ENCODE measurements at regions of chr9 and their contacts with region 1.

Region 1: GRCh38 chr9:38068866-38069629 is at the start of gene SHB:
- DNase-seq: no peak
- ATAC-seq: peak; percentile 70
- H3K4me3 ChIP-seq: peak within 1 kb of the TSS; percentile 82 to 93
- H3K27ac ChIP-seq: peak within 1 kb of the TSS; percentile 76
- H3K4me1 ChIP-seq: peaks cover 5% of the 10 kb centered on the region
- H3K27me3 ChIP-seq: no peaks in the 10 kb centered on the region
- CTCF ChIP-seq: peak; percentile 36; the same call in 1 of the 2 replicates
- total RNA-seq, gene SHB: 59.9 TPM

Region 2: GRCh38 chr9:37840560-37841194 is 228.4 kb before region 1 on chr9:
- CTCF ChIA-PET with region 1: no interaction called
- POLR2A ChIA-PET with region 1: no interaction called
- in situ Hi-C with region 1: no loop called
- intact Hi-C with region 1: no loop called
- DNase-seq: peak; percentile 33
- ATAC-seq: peak; percentile 87
- H3K4me3 ChIP-seq: no peak overlapping the region
- H3K27ac ChIP-seq: no peak overlapping the region
- H3K4me1 ChIP-seq: no peaks in the 10 kb centered on the region
- H3K27me3 ChIP-seq: no peaks in the 10 kb centered on the region
- CTCF ChIP-seq: no peak

Region 3: DNA sequence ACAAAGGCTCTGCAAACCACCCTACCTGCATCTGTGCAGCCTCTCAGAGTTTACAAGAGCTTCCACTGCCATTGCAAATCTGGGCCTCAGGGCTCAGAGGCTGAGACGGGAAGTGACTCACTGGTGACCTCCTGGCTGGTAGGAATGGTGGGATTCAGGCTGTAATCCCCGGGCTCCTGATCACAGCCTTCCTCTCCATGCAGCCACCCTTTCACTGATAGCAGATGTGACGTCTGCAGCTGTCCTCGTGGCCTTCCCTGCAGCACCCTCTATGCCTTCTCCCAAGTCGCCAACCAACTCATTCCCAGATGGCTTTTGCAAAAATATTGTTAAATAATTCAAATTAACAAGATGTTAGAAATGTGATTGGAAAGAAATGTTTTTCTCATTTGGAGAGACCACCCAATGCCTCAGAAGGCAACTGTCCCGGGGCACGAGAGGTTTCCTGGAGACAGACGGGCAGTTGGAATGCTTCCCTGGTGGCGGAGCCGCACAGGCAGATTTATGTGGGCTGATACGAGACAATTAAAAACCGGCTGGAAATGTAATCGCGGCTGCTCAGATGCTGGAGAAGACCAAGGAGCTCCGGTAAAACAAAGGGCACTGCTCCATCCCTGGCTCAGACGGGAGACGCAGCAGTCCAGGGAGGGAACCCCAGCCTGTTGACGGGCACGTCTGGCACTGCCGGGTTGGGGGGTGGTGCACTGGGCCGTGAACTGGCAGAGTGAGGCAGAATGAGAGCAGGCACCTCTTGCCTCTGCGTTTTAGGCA is 130.7 kb before region 1 on chr9:
- CTCF ChIA-PET with region 1: no interaction called
- POLR2A ChIA-PET with region 1: no interaction called
- in situ Hi-C with region 1: no loop called
- intact Hi-C with region 1: loop called (anchors 10 kb)
- DNase-seq: no peak
- ATAC-seq: peak; percentile 76
- H3K4me3 ChIP-seq: no peak overlapping the region
- H3K27ac ChIP-seq: peak overlapping the region; percentile 25
- H3K4me1 ChIP-seq: peaks cover 46% of the 10 kb centered on the region
- H3K27me3 ChIP-seq: no peaks in the 10 kb centered on the region
- CTCF ChIP-seq: no peak

Region 4: DNA sequence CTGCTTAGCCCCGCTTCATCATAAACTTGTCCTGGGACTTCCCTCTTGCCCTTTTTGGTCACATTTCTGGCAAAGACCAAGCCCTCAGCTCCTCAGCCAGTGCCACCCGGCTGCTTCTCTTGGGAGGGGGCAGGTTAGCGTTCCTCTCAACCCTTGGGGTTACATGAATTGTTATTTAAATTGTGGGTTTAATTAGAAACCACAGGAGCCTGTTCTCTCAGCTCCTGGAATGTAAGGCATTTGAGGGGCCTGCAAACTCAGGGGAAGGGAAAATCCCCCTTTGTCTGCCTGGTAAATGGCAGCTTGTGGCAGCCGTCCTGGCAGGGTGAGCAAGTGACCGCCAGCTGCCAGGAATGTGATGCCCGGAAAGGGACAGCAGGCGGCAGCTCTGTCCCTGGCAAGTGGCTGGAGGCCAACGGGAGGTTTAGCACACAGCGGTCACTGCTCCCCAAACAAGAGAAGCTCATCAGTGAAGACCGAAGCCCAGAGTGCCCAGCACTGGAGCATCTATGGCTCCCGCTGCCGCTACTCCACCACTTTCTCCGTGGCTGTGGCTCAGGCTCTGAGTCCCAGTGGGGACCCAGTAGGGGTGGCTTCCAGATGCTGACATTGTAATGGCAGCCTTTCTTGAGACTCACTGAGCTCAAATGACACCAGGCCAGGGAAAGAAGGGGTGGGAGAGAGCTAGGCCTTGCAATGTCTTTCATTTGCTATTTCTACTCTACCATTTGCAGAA is 51.7 kb before region 1 on chr9:
- CTCF ChIA-PET with region 1: no interaction called
- POLR2A ChIA-PET with region 1: no interaction called
- in situ Hi-C with region 1: no loop called
- intact Hi-C with region 1: loop called (anchors 5 kb)
- DNase-seq: no peak
- ATAC-seq: peak; percentile 68
- H3K4me3 ChIP-seq: 0 out of 4 replicates have a peak overlapping the region, but pooled peaks of 1 of the 2 experiments have one; percentile 6
- H3K27ac ChIP-seq: peak overlapping the region; percentile 92
- H3K4me1 ChIP-seq: peaks cover 73% of the 10 kb centered on the region
- H3K27me3 ChIP-seq: no peaks in the 10 kb centered on the region
- CTCF ChIP-seq: peak; percentile 74; the same call in 1 of the 2 replicates

Region 5: DNA sequence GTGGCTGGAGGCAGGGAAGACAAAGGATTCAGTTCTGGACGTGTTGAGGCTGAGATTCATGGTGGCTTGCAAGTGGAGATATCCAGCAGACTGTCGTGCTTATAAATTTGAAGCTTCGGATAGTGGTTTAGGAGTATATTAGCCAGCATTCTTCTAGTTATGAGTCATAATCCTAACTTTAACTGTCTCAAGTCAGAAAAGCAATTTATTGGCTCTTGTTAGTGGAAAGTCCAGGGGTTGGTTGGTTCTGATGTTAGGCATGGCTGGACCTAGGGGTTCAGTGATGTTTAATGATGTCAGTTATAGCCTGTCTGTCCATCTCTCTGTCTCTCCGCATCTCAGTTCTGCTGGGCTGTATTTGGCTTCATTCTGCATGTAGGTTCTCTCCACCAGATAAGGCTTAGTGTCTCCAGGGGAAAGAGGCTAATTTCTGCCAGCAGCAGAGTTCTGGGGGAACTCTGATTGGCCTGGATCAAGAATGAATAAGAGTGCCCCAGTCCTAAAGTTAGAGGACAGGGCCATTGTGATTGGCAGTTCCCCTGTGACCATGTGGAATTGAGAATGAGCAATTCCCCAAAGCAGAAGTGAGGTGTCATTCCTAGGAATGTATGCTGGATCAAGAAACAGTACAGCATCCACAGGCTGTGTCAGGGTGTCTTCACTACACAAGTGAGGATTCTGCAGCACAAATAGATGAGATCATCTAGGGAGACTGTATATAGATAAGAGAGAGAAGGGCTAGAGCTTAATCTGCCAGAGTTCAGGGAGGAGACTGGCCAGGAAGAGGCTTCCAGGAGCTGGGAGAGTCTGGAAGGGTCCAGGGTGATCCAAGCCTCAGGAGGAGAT is 72.9 kb after region 1 on chr9:
- CTCF ChIA-PET with region 1: no interaction called
- POLR2A ChIA-PET with region 1: no interaction called
- in situ Hi-C with region 1: no loop called
- intact Hi-C with region 1: no loop called
- DNase-seq: no peak
- ATAC-seq: no peak
- H3K4me3 ChIP-seq: no peak overlapping the region
- H3K27ac ChIP-seq: no peak overlapping the region
- H3K4me1 ChIP-seq: no peaks in the 10 kb centered on the region
- H3K27me3 ChIP-seq: peaks cover 6% of the 10 kb centered on the region
- CTCF ChIP-seq: no peak

Region 6: DNA sequence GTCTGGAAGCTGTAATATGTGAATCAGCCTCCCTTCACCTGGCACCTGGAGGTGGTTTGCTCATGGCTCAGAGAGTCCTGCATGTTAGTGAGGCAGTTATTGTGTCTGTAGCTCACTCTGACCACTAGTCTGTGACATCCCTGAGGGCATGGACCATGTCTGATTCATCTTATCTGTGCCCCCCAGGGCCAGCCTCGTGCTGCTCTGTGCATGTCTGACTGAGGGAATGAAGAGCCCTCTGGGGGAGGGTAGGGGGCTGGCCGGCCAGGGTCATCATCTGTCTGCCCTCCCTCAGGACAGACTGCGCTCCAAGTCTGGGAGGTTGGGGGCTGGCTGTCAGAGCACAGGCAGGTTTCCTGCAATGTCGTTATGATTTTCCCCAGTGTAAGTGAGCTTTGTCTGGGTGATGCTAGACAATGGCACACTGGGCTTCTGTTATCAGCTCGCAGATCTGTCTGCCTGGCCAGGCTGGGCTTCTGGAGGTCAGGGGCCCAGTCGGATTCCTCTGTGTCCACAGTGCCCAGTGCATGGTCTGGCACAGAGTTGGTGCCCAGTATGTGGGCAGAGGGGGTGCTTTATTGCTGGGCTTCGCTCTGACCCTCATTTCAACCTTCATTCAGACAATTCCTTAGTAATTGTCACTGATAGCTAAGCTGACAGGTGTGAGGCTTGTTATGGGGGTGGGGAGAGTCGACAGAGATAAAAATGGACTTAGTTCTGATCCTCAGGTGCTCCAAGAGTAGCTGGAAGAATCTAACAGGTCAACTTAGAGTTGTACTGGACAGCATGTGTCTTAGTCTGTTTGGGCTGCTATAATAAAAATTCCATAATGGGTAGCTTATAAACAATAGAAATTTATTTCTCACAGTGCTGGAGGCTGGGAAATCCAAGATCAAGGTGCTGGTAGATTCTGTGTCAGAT is 85.7 kb after region 1 on chr9:
- CTCF ChIA-PET with region 1: no interaction called
- POLR2A ChIA-PET with region 1: no interaction called
- in situ Hi-C with region 1: no loop called
- intact Hi-C with region 1: no loop called
- DNase-seq: no peak
- ATAC-seq: no peak
- H3K4me3 ChIP-seq: no peak overlapping the region
- H3K27ac ChIP-seq: no peak overlapping the region
- H3K4me1 ChIP-seq: no peaks in the 10 kb centered on the region
- H3K27me3 ChIP-seq: no peaks in the 10 kb centered on the region
- CTCF ChIP-seq: no peak

Region 7: DNA sequence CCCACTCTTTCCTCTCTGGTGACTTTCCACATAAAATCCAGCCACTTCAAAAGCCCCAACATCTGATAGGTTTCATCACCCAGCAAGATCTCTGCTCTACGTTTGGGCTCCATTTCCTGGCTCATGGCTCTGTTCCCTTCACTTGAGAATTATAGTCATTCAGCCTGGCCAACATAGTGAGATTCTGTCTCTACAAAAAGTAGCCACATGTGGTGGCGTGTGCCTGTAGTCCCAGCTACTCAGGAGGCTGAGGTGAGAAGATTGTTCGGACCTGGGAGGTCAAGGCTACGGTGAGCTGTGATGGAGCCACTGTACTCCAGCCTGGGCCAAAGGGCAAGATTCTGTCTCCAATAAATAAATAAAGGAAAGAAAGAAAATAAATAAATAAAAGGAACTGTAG is 438.5 kb after region 1 on chr9:
- CTCF ChIA-PET with region 1: no interaction called
- POLR2A ChIA-PET with region 1: no interaction called
- in situ Hi-C with region 1: no loop called
- intact Hi-C with region 1: no loop called
- DNase-seq: no peak
- ATAC-seq: no peak
- H3K4me3 ChIP-seq: no peak overlapping the region
- H3K27ac ChIP-seq: no peak overlapping the region
- H3K4me1 ChIP-seq: no peaks in the 10 kb centered on the region
- H3K27me3 ChIP-seq: no peaks in the 10 kb centered on the region
- CTCF ChIP-seq: no peak

Measured in Panc1 (cell line).